ENCODE measurements at regions of chr4 and their contacts with region 1.

Region 1: DNA sequence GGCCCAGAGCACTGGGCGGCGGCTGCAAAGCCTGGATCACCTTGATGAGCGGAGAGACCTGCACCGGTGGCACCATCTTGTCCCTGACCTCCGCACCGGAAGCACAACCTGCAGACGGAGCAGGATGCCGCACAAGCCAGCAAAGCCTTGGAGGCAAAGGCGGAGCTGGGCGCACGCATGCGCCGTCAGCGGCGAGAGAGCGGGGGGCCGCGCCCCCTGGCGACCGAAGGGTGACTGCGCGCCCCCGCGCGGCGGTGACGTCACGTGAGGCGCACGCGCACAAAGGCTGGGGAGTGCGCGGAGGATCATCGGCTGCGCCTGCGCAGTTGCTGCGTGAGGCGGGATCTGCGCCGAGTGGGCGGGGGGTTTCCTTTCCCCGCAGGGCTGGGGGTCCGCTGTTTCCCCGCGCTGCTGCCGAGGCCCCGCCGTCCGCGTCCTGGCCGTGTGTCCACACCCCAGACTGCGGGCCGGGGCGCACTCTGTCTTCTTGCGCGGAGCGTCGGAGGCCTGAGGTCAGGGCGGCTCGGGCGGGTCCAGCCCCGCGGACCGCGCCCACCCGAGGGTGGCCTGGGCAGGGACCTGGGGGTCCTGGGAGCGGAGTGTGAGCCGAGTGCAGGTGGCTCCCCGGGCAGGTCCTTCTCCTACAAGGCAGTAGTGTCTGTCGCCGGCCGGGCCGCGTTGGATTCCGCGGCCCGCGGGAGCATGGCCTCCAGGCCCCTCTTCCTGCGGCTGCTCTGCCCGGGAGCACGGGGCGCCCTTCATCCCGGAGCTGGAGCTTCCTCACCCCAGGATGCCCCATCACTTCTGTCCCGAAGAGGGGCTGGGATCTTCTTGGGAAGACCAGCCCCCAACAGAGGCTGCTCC is at the starts of genes ATP5ME and MYL5:
- DNase-seq: peak; percentile 96 to 97
- H3K4me3 ChIP-seq: peak within 1 kb of the TSS; percentile 84 to 94 (median 87)
- H3K27ac ChIP-seq: peak within 1 kb of the TSS; percentile 94 to 98
- H3K4me1 ChIP-seq: peaks cover 10 to 23% of the 10 kb centered on the region in 2 donors
- H3K27me3 ChIP-seq: no peaks in the 10 kb centered on the region
- CTCF ChIP-seq: peak; percentile 79 to 95 (median 93)
- POLR2A ChIP-seq: peak; percentile 76
- total RNA-seq, gene ATP5ME: 108 to 179 (median 128) TPM
- total RNA-seq, gene MYL5: 7.9 to 14.9 (median 12.1) TPM

Region 2: DNA sequence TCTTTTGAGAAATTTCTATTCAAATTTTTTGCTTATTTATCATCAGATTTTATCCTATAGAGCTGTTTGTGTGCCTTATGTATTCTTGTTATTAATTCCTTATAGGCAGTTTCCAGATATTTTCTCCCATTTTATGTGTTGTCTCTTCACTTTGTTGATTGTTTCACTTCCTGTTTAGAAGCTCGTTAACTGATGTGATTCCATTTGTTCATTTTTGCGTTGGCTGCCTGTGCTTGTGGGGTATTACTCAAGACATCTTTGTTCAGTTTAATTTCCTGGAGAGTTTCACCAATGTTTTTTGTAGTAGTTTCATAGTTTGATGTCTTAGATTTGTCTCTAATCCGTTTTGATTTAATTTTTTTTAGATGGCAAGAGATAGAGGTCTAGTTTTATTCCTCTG is 535.5 kb before region 1 on chr4:
- intact Hi-C with region 1: no loop called
- DNase-seq: no peak
- H3K4me3 ChIP-seq: no peak overlapping the region
- H3K27ac ChIP-seq: no peak overlapping the region
- H3K4me1 ChIP-seq: no peaks in the 10 kb centered on the region
- H3K27me3 ChIP-seq: no peaks in the 10 kb centered on the region
- CTCF ChIP-seq: no peak
- POLR2A ChIP-seq: no peak

Region 3: GRCh38 chr4:997375-998071 is 323.1 kb after region 1 on chr4:
- intact Hi-C with region 1: loop called (anchors 10 kb)
- DNase-seq: no peak
- H3K4me3 ChIP-seq: peak overlapping the region in 2 of 3 donors; percentile 48 to 65
- H3K27ac ChIP-seq: no peak overlapping the region
- H3K4me1 ChIP-seq: peaks cover 3 to 5% of the 10 kb centered on the region in 2 donors
- H3K27me3 ChIP-seq: peaks cover 4 to 43% of the 10 kb centered on the region in 2 donors
- CTCF ChIP-seq: no peak
- POLR2A ChIP-seq: no peak

Measured in breast epithelium (tissue), 4 donors.